ENCODE measurements at regions of chr1 and their contacts with region 1.

Region 1: GRCh38 chr1:111507411-111508201 is 4.2 kb upstream of the ADORA3 start:
- DNase-seq: no peak
- ATAC-seq: peak; percentile 92
- H3K4me3 ChIP-seq: peak overlapping the region; percentile 21 to 55
- H3K27ac ChIP-seq: peak overlapping the region; percentile 89
- H3K4me1 ChIP-seq: peaks cover 4% of the 10 kb centered on the region; the same call in 1 of the 2 replicates
- H3K27me3 ChIP-seq: no peaks in the 10 kb centered on the region
- CTCF ChIP-seq: no peak

Region 2: DNA sequence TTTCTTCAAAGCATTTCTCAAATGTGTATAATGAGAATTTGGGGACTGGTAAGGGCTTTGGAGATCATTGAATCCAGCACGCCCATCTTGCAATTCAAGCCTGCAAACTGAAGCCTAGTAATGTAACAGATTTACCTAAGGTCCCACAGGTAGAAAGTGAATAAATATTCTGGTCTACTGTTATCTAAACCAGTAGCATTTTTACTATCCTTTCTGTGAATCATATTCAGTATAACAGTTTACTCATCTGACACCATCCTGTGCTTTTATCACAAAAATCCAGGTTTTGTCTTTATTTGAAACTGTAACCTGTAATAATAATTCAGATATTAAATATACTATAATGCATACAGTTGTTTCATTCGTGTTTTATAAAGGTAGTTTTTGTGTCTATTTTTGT is 850.3 kb before region 1 on chr1:
- CTCF ChIA-PET with region 1: no interaction called
- POLR2A ChIA-PET with region 1: no interaction called
- in situ Hi-C with region 1: no loop called
- intact Hi-C with region 1: no loop called
- DNase-seq: no peak
- ATAC-seq: no peak
- H3K4me3 ChIP-seq: no peak overlapping the region
- H3K27ac ChIP-seq: no peak overlapping the region
- H3K4me1 ChIP-seq: no peaks in the 10 kb centered on the region
- H3K27me3 ChIP-seq: no peaks in the 10 kb centered on the region
- CTCF ChIP-seq: no peak

Region 3: GRCh38 chr1:111145542-111145941 is 362.1 kb before region 1 on chr1:
- CTCF ChIA-PET with region 1: interaction called, 14 read pairs
- POLR2A ChIA-PET with region 1: no interaction called
- in situ Hi-C with region 1: no loop called
- intact Hi-C with region 1: no loop called
- DNase-seq: no peak
- ATAC-seq: no peak
- H3K4me3 ChIP-seq: no peak overlapping the region
- H3K27ac ChIP-seq: no peak overlapping the region
- H3K4me1 ChIP-seq: peaks cover 9% of the 10 kb centered on the region; the same call in 1 of the 2 replicates
- H3K27me3 ChIP-seq: no peaks in the 10 kb centered on the region
- CTCF ChIP-seq: no peak

Region 4: GRCh38 chr1:111538343-111539025 is 30.9 kb after region 1 on chr1:
- CTCF ChIA-PET with region 1: no interaction called
- POLR2A ChIA-PET with region 1: no interaction called
- in situ Hi-C with region 1: no loop called
- intact Hi-C with region 1: no loop called
- DNase-seq: no peak
- ATAC-seq: no peak
- H3K4me3 ChIP-seq: no peak overlapping the region
- H3K27ac ChIP-seq: no peak overlapping the region
- H3K4me1 ChIP-seq: peaks cover 3% of the 10 kb centered on the region; the same call in 1 of the 2 replicates
- H3K27me3 ChIP-seq: no peaks in the 10 kb centered on the region
- CTCF ChIP-seq: no peak

Region 5: GRCh38 chr1:111656086-111657017 is 148.7 kb after region 1 on chr1:
- CTCF ChIA-PET with region 1: interaction called, 10 read pairs
- POLR2A ChIA-PET with region 1: no interaction called
- in situ Hi-C with region 1: no loop called
- intact Hi-C with region 1: loop called (anchors 1 kb)
- DNase-seq: peak; percentile 35
- ATAC-seq: no peak; the same call in 1 of the 2 replicates
- H3K4me3 ChIP-seq: no peak overlapping the region
- H3K27ac ChIP-seq: no peak overlapping the region
- H3K4me1 ChIP-seq: no peaks in the 10 kb centered on the region
- H3K27me3 ChIP-seq: no peaks in the 10 kb centered on the region
- CTCF ChIP-seq: peak; percentile 57; the same call in 1 of the 2 replicates

Region 6: DNA sequence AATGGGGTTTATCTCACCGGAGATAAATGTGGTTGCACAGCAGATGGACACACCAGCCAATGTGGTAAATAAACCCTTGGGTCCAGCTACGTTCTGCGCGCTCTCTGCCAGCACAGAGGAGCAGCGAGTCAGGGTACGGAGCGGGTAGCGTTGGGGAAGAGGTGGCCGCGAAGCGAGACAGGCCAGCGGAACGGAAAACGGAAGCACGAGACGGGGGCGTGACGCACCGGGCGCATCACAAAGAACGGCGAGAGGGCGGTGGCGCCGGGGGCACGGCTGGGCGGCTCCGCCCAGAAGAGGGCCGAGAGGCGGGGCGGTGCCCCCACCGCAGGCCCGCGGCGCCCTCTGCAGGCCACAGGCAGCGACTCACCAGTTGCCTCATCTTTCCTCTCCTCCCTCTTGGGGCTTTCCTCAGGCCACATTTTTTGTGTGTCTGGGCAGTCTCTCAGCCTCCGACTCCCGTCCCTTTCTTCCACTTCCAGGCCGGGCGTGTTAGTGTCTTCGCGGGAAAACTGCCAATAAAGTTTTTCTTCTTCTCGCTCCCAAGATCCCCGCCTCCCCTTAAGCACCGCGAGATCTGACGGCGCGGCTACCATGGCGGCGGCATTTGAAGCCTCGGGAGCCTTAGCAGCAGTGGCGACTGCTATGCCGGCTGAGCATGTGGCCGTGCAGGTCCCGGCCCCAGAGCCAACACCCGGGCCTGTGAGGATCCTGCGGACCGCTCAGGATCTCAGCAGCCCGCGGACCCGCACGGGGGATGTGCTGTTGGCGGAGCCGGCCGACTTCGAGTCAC is 247.9 kb after region 1 on chr1 and contains the start of gene DDX20:
- CTCF ChIA-PET with region 1: no interaction called
- POLR2A ChIA-PET with region 1: no interaction called
- in situ Hi-C with region 1: no loop called
- intact Hi-C with region 1: loop called (anchors 10 kb)
- DNase-seq: peak; percentile 74
- ATAC-seq: peak; percentile 96
- H3K4me3 ChIP-seq: peak within 1 kb of the TSS; percentile 72 to 95
- H3K27ac ChIP-seq: peak within 1 kb of the TSS; percentile 86
- H3K4me1 ChIP-seq: peaks cover 3% of the 10 kb centered on the region; the same call in 1 of the 2 replicates
- H3K27me3 ChIP-seq: no peaks in the 10 kb centered on the region
- CTCF ChIP-seq: peak; percentile 92
- total RNA-seq, gene DDX20: 9.1 TPM

Measured in Panc1 (cell line).